SK-N-SH (cell line): ENCODE measurements at regions of chr11 and their contacts with region 1.

Region 1: GRCh38 chr11:35822815-35823495 is 120.9 kb upstream of the LDLRAD3 start:
- DNase-seq: no peak
- H3K4me3 ChIP-seq: no peak overlapping the region
- H3K27ac ChIP-seq: peak overlapping the region in 1 of 2 experiments; percentile 22; a peak in 2 of 4 replicates
- H3K4me1 ChIP-seq: peaks cover 6 to 12% of the 10 kb centered on the region in 2 experiments; a peak in 3 of 4 replicates
- H3K27me3 ChIP-seq: no peaks in the 10 kb centered on the region
- CTCF ChIP-seq: no peak
- EP300 ChIP-seq: no peak
- RAD21 ChIP-seq: no peak

Region 2: DNA sequence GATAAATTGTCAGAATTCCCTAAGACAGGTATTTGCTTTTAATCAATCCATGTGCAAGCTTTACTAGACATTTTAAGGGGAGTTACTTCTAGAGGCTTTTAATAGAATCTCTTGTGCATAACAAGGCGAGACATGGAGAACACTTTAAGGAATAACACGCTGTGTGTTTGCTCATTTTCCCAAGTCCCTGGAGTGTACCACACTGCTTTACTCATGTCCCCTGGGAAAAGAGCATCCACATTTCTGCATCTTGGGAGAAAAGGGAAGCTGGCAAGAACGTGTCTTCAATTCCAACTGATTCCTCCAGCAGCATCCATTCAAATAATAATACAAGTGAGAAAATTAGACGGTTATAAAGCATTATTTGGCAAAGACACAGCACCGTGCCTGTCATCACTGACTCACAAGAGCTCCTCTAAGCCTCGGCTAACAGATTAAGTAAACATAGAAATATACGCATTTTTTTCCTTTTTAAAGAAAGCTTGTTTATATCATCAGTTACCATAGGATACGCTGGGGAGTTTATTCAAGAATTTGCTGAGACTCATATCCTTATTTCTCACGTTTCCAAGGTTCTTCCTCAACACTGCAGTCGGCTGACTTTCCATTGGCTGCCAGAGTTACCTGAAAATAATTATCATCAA is 562.5 kb before region 1 on chr11:
- CTCF ChIA-PET with region 1: no interaction called
- POLR2A ChIA-PET with region 1: no interaction called
- DNase-seq: no peak
- H3K4me3 ChIP-seq: no peak overlapping the region
- H3K27ac ChIP-seq: peak overlapping the region in 1 of 2 experiments; percentile 76; a peak in 2 of 4 replicates
- H3K4me1 ChIP-seq: peaks cover 0 to 6% of the 10 kb centered on the region in 2 experiments; a peak in 3 of 4 replicates
- H3K27me3 ChIP-seq: no peaks in the 10 kb centered on the region
- CTCF ChIP-seq: no peak
- EP300 ChIP-seq: 0 out of 4 replicates have a peak, but pooled peaks of 1 of the 2 experiments have one; percentile 34
- RAD21 ChIP-seq: no peak

Region 3: DNA sequence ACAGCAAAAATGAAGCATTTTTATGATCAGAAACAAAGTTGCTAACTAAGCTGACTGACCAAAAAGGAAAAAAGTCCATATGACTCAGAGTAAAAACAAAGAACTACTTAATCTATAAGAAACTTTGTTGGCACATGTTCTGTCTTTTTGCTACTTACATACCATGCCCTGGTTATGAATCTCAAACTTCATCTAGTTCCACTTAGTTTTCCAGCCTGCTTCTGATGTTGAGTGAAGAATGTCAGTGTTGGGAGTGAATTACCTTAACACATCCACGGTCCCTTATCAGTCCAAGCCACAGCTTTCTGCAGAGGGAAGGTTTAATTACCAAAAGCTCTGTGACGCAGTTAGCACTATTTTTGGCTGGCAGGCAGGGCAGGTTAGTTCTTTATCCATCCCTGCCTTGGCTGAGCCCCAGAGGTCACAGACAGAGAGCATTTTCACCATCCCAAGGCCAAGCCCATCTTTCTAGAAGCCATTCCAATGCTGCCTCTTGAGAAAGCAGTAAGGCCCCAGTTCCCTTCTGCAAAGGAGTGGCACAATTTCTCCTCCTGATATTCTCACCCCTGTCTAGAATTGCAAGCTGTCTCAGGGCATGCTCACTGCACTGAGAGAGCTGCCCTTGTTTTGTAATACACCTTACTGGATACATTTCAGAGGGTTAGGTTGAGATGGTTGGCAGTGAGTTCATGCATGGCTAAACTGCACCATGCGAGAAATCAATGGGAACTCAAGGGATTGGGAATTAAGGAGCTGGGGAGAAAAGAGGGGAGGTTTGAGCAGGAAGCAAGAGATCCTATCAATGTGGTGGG is 470.7 kb before region 1 on chr11:
- CTCF ChIA-PET with region 1: no interaction called
- POLR2A ChIA-PET with region 1: no interaction called
- DNase-seq: no peak
- H3K4me3 ChIP-seq: no peak overlapping the region
- H3K27ac ChIP-seq: peak overlapping the region in 1 of 2 experiments; percentile 84; a peak in 2 of 4 replicates
- H3K4me1 ChIP-seq: peaks cover 12 to 34% of the 10 kb centered on the region in 2 experiments; a peak in 3 of 4 replicates
- H3K27me3 ChIP-seq: no peaks in the 10 kb centered on the region
- CTCF ChIP-seq: no peak
- EP300 ChIP-seq: no peak
- RAD21 ChIP-seq: no peak

Region 4: GRCh38 chr11:35553831-35554230 is 269.1 kb before region 1 on chr11:
- CTCF ChIA-PET with region 1: no interaction called
- POLR2A ChIA-PET with region 1: no interaction called
- DNase-seq: no peak
- H3K4me3 ChIP-seq: no peak overlapping the region
- H3K27ac ChIP-seq: peak overlapping the region in 1 of 2 experiments; percentile 56; a peak in 2 of 4 replicates
- H3K4me1 ChIP-seq: peaks cover 4 to 40% of the 10 kb centered on the region in 2 experiments
- H3K27me3 ChIP-seq: no peaks in the 10 kb centered on the region
- CTCF ChIP-seq: no peak
- EP300 ChIP-seq: peak in 1 of 2 experiments; percentile 70; a peak in 1 of 4 replicates
- RAD21 ChIP-seq: no peak

Region 5: DNA sequence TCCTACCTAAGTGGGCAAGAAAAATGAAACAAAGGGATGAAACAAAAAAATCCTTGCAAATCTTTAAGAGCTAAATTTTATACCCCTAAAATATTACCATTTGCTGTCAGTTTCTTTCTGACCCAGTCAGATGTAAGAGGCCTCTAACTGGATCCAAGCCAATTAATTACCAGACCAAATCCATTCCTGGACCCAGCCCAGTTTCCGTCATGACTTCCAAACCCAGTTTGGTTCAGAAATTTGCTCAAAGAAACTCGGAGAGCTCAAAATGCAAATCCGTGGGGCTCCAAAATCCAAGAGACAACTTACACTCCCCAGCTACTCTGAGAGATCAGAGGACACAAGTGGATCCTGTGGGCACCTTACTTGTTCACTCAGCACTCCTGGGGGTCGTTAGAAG is 113.6 kb before region 1 on chr11:
- CTCF ChIA-PET with region 1: interaction called, 11 read pairs
- POLR2A ChIA-PET with region 1: no interaction called
- DNase-seq: no peak
- H3K4me3 ChIP-seq: no peak overlapping the region
- H3K27ac ChIP-seq: no peak overlapping the region
- H3K4me1 ChIP-seq: no peaks in the 10 kb centered on the region
- H3K27me3 ChIP-seq: no peaks in the 10 kb centered on the region
- CTCF ChIP-seq: no peak
- EP300 ChIP-seq: no peak
- RAD21 ChIP-seq: no peak

Region 6: GRCh38 chr11:35838071-35838470 is 15.1 kb after region 1 on chr11:
- CTCF ChIA-PET with region 1: interaction called, 107 read pairs
- POLR2A ChIA-PET with region 1: no interaction called
- DNase-seq: no peak
- H3K4me3 ChIP-seq: no peak overlapping the region
- H3K27ac ChIP-seq: no peak overlapping the region
- H3K4me1 ChIP-seq: no peaks in the 10 kb centered on the region; a peak in 2 of 4 replicates
- H3K27me3 ChIP-seq: no peaks in the 10 kb centered on the region
- CTCF ChIP-seq: no peak
- EP300 ChIP-seq: no peak
- RAD21 ChIP-seq: no peak

Region 7: DNA sequence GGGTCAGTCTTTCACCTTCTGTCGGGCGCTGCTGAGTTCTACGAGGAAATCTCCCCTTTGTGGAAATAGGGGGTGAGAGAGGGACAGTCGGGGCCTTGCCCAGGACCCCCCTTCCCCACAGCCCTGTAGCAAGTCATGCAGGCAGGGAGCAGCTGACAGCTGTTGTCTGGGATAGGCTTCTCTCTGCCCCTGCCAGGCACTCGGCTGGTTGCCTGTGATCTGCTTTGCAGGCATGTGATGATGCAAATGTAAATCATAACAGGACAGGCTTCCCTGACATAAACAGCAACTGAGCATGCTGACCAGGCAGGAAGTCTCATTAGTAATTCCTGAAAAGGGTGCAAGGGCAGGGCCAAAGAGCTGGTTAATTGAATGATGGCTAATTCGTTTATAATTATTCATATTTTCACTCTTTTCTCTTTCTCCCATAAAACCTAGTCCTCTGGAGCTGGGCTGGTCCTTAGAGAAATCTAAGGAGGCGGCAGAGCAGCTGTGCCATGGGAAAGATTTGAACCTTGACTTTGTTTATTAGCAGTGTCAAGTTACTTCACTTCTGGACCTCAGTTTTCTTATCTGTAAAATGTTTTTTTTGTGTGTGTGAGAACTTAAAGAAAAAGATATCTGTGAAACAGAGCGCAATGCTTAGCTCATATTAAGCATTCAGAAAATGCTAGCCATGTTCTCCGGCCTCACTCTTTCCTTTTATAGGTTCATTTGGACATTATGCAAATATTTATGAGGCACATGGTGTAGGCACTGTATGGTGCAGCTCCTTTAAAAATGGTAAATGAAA is 250.7 kb after region 1 on chr11:
- CTCF ChIA-PET with region 1: interaction called, 65 read pairs
- POLR2A ChIA-PET with region 1: interaction called, 3 read pairs
- DNase-seq: peak; percentile 69
- H3K4me3 ChIP-seq: no peak overlapping the region
- H3K27ac ChIP-seq: peak overlapping the region in 1 of 2 experiments; percentile 73; a peak in 2 of 4 replicates
- H3K4me1 ChIP-seq: peaks cover 12 to 20% of the 10 kb centered on the region in 2 experiments; a peak in 3 of 4 replicates
- H3K27me3 ChIP-seq: no peaks in the 10 kb centered on the region
- CTCF ChIP-seq: no peak
- EP300 ChIP-seq: peak in 1 of 2 experiments; percentile 61; a peak in 2 of 4 replicates
- RAD21 ChIP-seq: peak; percentile 24; the same call in 1 of the 2 replicates

Region 8: GRCh38 chr11:36230779-36231699 is 408.1 kb after region 1 on chr11:
- CTCF ChIA-PET with region 1: interaction called, 10 read pairs
- POLR2A ChIA-PET with region 1: no interaction called
- DNase-seq: peak; percentile 74
- H3K4me3 ChIP-seq: no peak overlapping the region; a peak in 1 of 4 replicates
- H3K27ac ChIP-seq: peak overlapping the region; percentile 41 to 69; a peak in 3 of 4 replicates
- H3K4me1 ChIP-seq: peaks cover 7 to 25% of the 10 kb centered on the region in 2 experiments; a peak in 3 of 4 replicates
- H3K27me3 ChIP-seq: no peaks in the 10 kb centered on the region
- CTCF ChIP-seq: no peak
- EP300 ChIP-seq: peak; percentile 75 to 86
- RAD21 ChIP-seq: peak; percentile 15; the same call in 1 of the 2 replicates

Region 9: DNA sequence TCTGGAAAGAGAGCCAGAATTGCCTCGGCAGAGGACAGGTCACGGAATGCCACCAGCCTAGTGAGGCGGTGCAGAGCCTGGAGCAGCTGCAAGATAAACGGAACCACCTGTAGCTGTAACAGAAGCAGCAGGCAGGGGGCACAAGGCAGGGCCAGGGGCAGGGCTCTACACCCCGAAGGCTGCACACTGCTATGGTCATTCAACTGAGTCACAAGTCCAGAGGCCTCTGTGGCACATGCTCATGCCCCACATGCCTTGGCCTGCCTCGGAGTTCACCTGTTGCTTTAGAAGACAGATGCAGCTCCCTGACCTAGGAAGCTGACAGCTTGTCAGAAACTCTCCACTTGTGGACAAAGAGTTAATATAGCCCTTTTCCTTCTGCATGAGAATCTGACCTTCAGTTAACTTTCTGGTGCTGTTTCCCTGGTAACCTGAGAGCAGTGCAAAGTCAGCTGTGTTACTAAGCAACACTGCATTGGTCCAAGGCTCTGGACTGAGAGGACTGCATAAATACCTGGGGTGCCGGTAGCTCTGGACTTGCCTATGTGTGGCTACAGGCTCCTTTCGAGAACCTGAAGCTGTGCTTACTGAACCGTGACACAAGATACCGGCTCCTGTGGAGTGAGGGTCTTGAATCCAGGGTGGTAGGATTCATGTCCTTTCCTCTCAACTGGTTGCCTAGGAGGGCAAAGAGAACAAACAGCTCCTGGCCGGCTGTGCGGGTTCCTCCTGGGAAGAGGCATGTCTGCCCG is 455.8 kb after region 1 on chr11:
- CTCF ChIA-PET with region 1: interaction called, 11 read pairs
- POLR2A ChIA-PET with region 1: no interaction called
- DNase-seq: no peak
- H3K4me3 ChIP-seq: no peak overlapping the region
- H3K27ac ChIP-seq: no peak overlapping the region
- H3K4me1 ChIP-seq: no peaks in the 10 kb centered on the region; a peak in 1 of 4 replicates
- H3K27me3 ChIP-seq: no peaks in the 10 kb centered on the region
- CTCF ChIP-seq: no peak
- EP300 ChIP-seq: no peak
- RAD21 ChIP-seq: no peak